MCF 10A (cell line): ENCODE measurements at regions of chr6 and their contacts with region 1.

Region 1: GRCh38 chr6:72411872-72412708 is 209.8 kb upstream of the KCNQ5 start:
- DNase-seq: peak; percentile 73
- H3K4me3 Mint-ChIP-seq: no peak overlapping the region
- H3K27ac Mint-ChIP-seq: no peak overlapping the region
- H3K4me1 Mint-ChIP-seq: no peaks in the 10 kb centered on the region
- H3K27me3 Mint-ChIP-seq: peaks cover 23% of the 10 kb centered on the region
- CTCF ChIP-seq: peak; percentile 100

Region 2: GRCh38 chr6:71533939-71534379 is 878.1 kb before region 1 on chr6:
- CTCF ChIA-PET with region 1: no interaction called
- POLR2A ChIA-PET with region 1: no interaction called
- intact Hi-C with region 1: no loop called
- DNase-seq: peak; percentile 42
- H3K4me3 Mint-ChIP-seq: no peak overlapping the region
- H3K27ac Mint-ChIP-seq: no peak overlapping the region
- H3K4me1 Mint-ChIP-seq: peaks cover 6% of the 10 kb centered on the region
- H3K27me3 Mint-ChIP-seq: peaks cover 36% of the 10 kb centered on the region
- CTCF ChIP-seq: peak; percentile 62

Region 3: DNA sequence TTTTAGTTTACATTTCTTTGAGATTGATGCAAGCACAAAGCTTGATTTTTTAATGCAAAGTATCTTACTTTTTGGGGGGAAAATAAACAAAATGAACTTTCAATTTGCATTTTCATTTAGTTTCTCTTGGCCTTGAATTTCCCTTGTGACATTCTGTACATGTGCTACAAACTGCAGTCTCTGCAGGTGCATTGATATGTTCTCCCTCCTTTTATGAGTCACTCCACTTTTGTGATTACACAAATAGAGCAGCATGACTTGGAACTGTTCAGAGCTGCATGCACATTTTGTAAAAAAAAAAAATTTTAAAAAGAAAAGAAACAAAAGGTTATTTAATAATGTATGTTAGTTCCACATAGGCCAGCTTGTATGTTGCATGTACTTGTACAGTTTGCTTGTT is 10.2 kb before region 1 on chr6:
- CTCF ChIA-PET with region 1: interaction called, 10 read pairs
- POLR2A ChIA-PET with region 1: no interaction called
- intact Hi-C with region 1: no loop called
- DNase-seq: no peak
- H3K4me3 Mint-ChIP-seq: no peak overlapping the region
- H3K27ac Mint-ChIP-seq: no peak overlapping the region
- H3K4me1 Mint-ChIP-seq: no peaks in the 10 kb centered on the region
- H3K27me3 Mint-ChIP-seq: peaks cover 100% of the 10 kb centered on the region
- CTCF ChIP-seq: no peak

Region 4: DNA sequence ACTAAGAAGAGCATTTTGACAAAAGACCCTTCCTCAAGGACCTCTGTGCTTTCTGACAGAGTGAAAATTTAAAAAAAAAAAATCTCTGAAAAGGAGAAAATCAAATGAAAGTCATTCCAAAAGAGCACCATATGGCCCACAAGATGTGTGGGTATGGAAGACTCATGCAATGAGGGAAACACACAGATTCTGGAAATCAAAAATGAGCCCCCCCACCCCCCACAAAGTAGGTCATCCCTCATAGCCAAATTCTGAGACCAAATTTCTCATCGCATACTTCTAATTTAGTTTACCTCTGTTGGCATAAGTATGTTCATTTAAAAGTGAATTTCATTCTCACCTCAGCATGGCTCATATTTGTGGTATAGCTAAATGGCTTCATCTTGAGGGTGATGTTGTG is 28.5 kb after region 1 on chr6:
- CTCF ChIA-PET with region 1: interaction called, 24 read pairs
- POLR2A ChIA-PET with region 1: no interaction called
- intact Hi-C with region 1: no loop called
- DNase-seq: no peak
- H3K4me3 Mint-ChIP-seq: no peak overlapping the region
- H3K27ac Mint-ChIP-seq: no peak overlapping the region
- H3K4me1 Mint-ChIP-seq: no peaks in the 10 kb centered on the region
- H3K27me3 Mint-ChIP-seq: peaks cover 80% of the 10 kb centered on the region
- CTCF ChIP-seq: no peak

Region 5: DNA sequence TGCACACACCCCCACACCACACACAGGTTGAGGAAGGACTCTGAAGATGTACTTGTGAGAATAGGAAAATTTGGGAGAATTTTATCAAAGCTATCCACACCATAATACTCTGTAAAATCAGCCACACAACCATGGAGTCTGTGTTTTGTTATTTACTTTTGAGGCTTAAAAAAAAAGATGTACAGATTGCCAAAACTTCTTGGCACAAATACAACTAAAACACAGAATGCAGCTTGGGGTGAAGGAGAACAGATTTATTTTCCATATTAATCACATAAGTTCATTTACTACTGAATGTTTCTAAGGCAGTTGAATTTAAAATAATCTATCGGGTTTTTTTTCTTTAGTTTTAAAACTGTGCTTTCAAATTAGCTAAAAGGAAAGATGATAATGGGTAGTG is 177.0 kb after region 1 on chr6:
- CTCF ChIA-PET with region 1: interaction called, 18 read pairs
- POLR2A ChIA-PET with region 1: no interaction called
- intact Hi-C with region 1: no loop called
- DNase-seq: peak; percentile 6
- H3K4me3 Mint-ChIP-seq: no peak overlapping the region
- H3K27ac Mint-ChIP-seq: no peak overlapping the region
- H3K4me1 Mint-ChIP-seq: peaks cover 11% of the 10 kb centered on the region
- H3K27me3 Mint-ChIP-seq: peaks cover 17% of the 10 kb centered on the region
- CTCF ChIP-seq: no peak

Region 6: GRCh38 chr6:73129653-73130443 is 717.8 kb after region 1 on chr6:
- CTCF ChIA-PET with region 1: interaction called, 67 read pairs
- POLR2A ChIA-PET with region 1: no interaction called
- intact Hi-C with region 1: loop called (anchors 1 kb)
- DNase-seq: peak; percentile 81
- H3K4me3 Mint-ChIP-seq: no peak overlapping the region
- H3K27ac Mint-ChIP-seq: peak overlapping the region; percentile 25
- H3K4me1 Mint-ChIP-seq: no peaks in the 10 kb centered on the region
- H3K27me3 Mint-ChIP-seq: no peaks in the 10 kb centered on the region
- CTCF ChIP-seq: peak; percentile 95

Region 7: DNA sequence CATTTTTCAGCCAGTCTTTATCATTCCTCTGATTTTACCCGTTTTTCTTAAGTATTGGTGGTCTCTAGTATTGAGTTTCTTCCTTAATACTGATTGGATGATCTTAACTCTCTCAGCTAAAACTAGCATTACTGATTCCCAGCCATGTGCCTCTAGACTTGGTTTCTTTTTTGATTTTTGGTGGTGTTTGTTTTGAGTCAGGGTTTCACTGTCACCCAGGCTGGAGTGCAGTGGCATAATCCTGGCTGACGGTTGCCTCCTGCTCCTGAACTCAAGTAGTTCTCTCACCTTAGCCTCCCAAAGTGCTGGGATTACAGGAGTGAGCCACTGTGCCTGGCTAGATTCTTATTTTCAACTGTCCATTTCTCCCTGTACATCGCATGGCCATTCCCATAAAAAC is 917.1 kb after region 1 on chr6:
- CTCF ChIA-PET with region 1: interaction called, 28 read pairs
- POLR2A ChIA-PET with region 1: no interaction called
- intact Hi-C with region 1: loop called (anchors 1 kb)
- DNase-seq: no peak
- H3K4me3 Mint-ChIP-seq: no peak overlapping the region
- H3K27ac Mint-ChIP-seq: no peak overlapping the region
- H3K4me1 Mint-ChIP-seq: peaks cover 5% of the 10 kb centered on the region
- H3K27me3 Mint-ChIP-seq: peaks cover 13% of the 10 kb centered on the region
- CTCF ChIP-seq: no peak